Panc1 (cell line): ENCODE measurements at regions of chr7 and their contacts with region 1.

Region 1: DNA sequence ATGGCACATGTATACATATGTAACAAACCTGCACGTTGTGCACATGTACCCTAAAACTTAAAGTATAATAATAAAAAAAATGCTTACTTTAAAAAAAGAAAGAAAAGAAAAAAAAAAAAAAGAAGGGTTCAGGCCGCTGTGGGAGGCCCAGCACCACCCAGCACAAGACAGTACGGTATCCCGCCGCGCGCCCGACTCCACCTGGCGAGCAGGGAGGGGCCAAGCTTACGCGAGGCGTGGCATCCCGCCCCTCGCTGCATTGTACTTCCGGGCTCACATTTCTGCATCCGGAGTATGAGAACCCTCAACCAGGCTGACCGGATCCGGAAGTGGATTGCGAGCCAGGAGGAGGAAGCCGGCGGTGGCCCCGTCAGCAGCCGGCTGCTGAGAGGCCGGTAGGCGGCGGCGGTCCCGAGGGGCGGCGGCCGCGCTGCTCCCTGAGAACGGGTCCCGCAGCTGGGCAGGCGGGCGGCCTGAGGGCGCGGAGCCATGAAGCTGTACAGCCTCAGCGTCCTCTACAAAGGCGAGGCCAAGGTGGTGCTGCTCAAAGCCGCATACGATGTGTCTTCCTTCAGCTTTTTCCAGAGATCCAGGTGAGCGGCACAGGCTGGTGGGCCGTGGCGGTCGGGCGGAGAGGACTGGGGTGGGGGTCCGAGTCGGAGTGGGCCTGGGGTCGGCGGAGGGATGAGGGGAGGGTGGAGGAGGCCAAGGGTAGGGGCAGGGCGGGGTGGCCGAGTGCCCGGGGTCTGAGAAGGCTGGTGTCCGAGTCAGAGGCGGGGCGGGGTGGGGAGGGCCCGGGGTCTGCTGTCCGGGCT is at the start of gene YKT6:
- DNase-seq: peak; percentile 89
- ATAC-seq: peak; percentile 100
- H3K4me3 ChIP-seq: peak within 1 kb of the TSS; percentile 73 to 80
- H3K27ac ChIP-seq: peak within 1 kb of the TSS; percentile 84
- H3K4me1 ChIP-seq: peaks cover 6% of the 10 kb centered on the region
- H3K27me3 ChIP-seq: no peaks in the 10 kb centered on the region
- CTCF ChIP-seq: peak; percentile 61; the same call in 1 of the 2 replicates
- total RNA-seq, gene YKT6: 207 TPM

Region 2: DNA sequence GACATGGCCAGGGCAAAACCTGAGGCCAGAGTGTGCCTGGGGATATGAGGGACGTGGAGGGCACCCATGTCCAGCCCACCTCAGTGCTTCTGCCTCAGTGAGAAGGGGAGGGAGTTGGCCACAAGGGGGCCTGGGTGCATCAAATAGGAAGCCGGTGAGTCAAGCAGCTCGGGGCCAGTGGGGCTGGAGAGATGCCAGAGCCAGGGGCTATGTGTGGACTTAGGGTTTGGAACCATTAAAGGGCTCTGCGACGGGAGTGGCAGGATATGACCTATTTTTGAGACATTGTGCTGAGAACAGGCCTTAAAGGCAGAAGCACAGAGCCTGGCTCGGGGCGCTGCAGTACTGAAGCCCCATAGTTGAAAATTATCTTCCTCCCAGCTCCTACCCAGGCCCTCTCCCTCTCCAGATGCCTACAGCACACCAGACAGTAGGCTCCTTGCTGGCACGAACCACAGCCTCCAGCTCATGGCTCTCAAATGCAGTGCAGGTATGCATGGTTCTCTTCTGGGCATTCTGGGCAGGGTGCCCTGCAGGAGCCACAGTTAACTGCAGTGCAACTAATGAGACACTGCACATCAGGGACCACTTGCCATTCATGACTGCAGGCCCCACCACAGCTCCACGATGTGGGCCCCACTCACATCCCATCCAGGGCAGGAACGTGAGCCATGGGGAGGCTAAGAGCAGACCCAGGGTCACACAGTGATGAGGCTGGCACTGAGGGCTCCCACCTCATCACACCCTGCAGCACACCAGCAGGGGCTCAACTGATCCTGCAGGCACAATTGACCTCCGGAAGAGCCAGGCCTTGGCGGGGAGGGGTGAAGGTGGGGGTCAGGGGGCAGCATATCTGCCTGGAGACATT is 128.3 kb before region 1 on chr7:
- CTCF ChIA-PET with region 1: no interaction called
- POLR2A ChIA-PET with region 1: no interaction called
- in situ Hi-C with region 1: no loop called
- intact Hi-C with region 1: loop called (anchors 5 kb)
- DNase-seq: no peak
- ATAC-seq: peak; percentile 70
- H3K4me3 ChIP-seq: no peak overlapping the region
- H3K27ac ChIP-seq: no peak overlapping the region
- H3K4me1 ChIP-seq: peaks cover 4% of the 10 kb centered on the region; the same call in 1 of the 2 replicates
- H3K27me3 ChIP-seq: no peaks in the 10 kb centered on the region
- CTCF ChIP-seq: peak; percentile 86; the same call in 1 of the 2 replicates

Region 3: GRCh38 chr7:44131173-44132029 is 69.5 kb before region 1 on chr7:
- CTCF ChIA-PET with region 1: interaction called, 3 read pairs
- POLR2A ChIA-PET with region 1: no interaction called
- in situ Hi-C with region 1: no loop called
- intact Hi-C with region 1: loop called (anchors 5 kb)
- DNase-seq: no peak
- ATAC-seq: peak; percentile 84
- H3K4me3 ChIP-seq: no peak overlapping the region
- H3K27ac ChIP-seq: no peak overlapping the region
- H3K4me1 ChIP-seq: peaks cover 12% of the 10 kb centered on the region
- H3K27me3 ChIP-seq: no peaks in the 10 kb centered on the region
- CTCF ChIP-seq: peak; percentile 78; the same call in 1 of the 2 replicates

Region 4: DNA sequence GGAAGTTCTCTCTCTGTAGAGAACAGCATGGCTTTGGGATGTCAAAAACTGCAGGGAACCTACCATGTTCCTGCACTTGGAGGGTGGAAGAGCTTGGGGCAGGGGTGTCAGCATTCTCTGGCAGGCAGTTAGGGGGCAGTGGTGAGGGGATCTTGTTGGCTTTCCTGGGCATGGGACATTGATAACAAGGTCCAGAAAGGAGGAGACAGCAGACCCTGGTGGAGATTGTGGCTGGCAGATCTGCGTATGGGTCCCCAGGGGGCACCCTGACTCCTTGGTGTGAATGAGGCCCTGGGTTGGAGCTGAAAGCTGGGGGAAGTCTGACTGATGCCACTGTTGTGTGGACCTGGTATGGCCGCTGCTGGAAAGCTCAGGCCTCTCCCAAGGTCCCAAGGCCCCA is 147.4 kb after region 1 on chr7:
- CTCF ChIA-PET with region 1: no interaction called
- POLR2A ChIA-PET with region 1: no interaction called
- in situ Hi-C with region 1: loop called (anchors 25 kb)
- intact Hi-C with region 1: no loop called
- DNase-seq: no peak
- ATAC-seq: peak; percentile 89
- H3K4me3 ChIP-seq: no peak overlapping the region
- H3K27ac ChIP-seq: no peak overlapping the region
- H3K4me1 ChIP-seq: no peaks in the 10 kb centered on the region
- H3K27me3 ChIP-seq: no peaks in the 10 kb centered on the region; the same call in 1 of the 2 replicates
- CTCF ChIP-seq: peak; percentile 70